Activated CD4-positive, alpha-beta memory T cell treated with anti-CD3 and anti-CD28 coated beads for 36 hours (primary cell): ENCODE measurements at regions of chr19 and their contacts with region 1.

Region 1: GRCh38 chr19:34269968-34270621 is 15.7 kb downstream of the GARRE1 start:
- DNase-seq: peak; percentile 85
- H3K4me3 Mint-ChIP-seq: peak overlapping the region; percentile 58
- H3K27ac Mint-ChIP-seq: peak overlapping the region; percentile 96
- H3K4me1 Mint-ChIP-seq: peaks cover 60% of the 10 kb centered on the region
- H3K27me3 Mint-ChIP-seq: no peaks in the 10 kb centered on the region

Region 2: DNA sequence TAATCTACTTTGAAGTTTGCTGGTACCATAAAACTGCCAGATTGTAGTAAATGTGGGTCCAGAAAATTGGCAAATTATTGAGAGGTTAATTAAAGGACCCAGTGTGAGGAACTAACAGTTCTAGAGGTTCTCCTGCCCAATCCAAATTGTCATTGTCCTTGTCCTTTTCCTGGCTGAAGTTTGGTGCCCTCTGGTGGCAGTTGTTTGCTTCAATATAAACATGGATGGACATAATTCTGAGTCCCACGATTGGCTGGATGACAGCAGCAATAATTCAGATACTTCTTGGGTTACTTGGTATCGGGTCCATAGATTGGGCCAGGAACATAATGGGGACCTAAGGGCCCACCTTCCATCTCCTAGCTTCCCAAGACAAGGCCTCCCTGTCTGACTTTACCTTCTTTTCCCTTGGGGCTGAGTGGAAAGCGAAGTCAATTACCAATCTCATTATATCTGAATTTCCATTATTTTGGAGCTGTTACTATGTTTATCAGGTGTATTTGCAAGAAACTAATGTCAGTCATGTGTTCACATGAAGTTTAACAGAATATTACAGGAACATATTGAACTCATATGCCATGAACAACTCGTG is 49.5 kb before region 1 on chr19:
- CTCF ChIA-PET with region 1: interaction called, 3 read pairs
- POLR2A ChIA-PET with region 1: no interaction called
- intact Hi-C with region 1: loop called (anchors 1 kb)
- DNase-seq: peak; percentile 69
- H3K4me3 Mint-ChIP-seq: no peak overlapping the region
- H3K27ac Mint-ChIP-seq: no peak overlapping the region
- H3K4me1 Mint-ChIP-seq: peaks cover 48% of the 10 kb centered on the region
- H3K27me3 Mint-ChIP-seq: no peaks in the 10 kb centered on the region

Region 3: DNA sequence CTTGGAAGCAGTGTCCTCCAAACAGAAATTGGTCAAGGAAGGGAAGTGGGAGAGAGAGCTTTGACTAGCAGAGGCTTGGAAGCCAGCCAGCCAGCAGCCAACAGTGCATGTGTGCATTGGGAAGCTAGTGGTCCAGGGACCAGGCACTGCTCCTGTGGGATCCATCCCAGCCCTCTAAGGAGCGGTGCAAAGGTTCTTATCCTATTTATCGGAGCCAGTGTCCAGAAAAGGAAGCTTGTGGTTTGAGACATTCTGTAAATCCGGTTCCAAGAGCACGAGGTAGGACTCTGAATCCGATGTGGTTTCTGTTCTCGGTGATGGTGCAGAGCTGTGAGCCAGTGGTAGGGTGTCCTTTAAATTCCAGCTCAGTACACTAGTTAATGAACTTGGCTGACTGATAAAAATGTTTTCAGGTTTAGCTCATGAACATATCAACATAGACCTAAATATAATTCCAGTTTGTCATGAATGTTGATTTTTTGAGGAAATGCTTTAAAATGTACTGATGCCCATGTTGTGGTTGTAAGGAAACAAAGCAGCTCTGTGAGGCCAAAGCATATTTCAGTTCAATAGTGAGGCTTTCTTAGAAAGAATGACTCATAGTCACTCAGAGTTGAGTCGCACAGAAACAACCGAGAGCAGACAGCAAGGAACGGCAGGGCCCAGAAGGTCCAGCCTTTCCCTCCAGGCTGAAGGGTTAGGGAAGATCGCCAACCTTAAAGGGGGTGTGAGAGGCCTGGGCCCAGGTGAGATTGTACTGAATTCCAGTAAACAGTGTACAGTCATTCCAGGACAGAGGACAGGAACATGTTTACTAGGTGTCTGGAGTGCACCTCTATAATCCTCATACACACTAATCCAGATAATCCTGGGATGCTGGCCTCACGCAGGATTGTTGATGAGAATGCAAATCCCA is 37.3 kb before region 1 on chr19:
- CTCF ChIA-PET with region 1: no interaction called
- POLR2A ChIA-PET with region 1: interaction called, 4 read pairs
- intact Hi-C with region 1: loop called (anchors 1 kb)
- DNase-seq: peak; percentile 56
- H3K4me3 Mint-ChIP-seq: no peak overlapping the region
- H3K27ac Mint-ChIP-seq: peak overlapping the region; percentile 84
- H3K4me1 Mint-ChIP-seq: peaks cover 32% of the 10 kb centered on the region
- H3K27me3 Mint-ChIP-seq: no peaks in the 10 kb centered on the region

Region 4: GRCh38 chr19:34253699-34254551 is 16.2 kb before region 1 on chr19:
- CTCF ChIA-PET with region 1: no interaction called
- POLR2A ChIA-PET with region 1: no interaction called
- intact Hi-C with region 1: loop called (anchors 1 kb)
- DNase-seq: peak; percentile 90
- H3K4me3 Mint-ChIP-seq: peak overlapping the region; percentile 89
- H3K27ac Mint-ChIP-seq: peak overlapping the region; percentile 86
- H3K4me1 Mint-ChIP-seq: peaks cover 27% of the 10 kb centered on the region
- H3K27me3 Mint-ChIP-seq: no peaks in the 10 kb centered on the region

Region 5: GRCh38 chr19:34308381-34309367 is 38.6 kb after region 1 on chr19:
- CTCF ChIA-PET with region 1: no interaction called
- POLR2A ChIA-PET with region 1: no interaction called
- intact Hi-C with region 1: loop called (anchors 5 kb)
- DNase-seq: peak; percentile 22
- H3K4me3 Mint-ChIP-seq: no peak overlapping the region
- H3K27ac Mint-ChIP-seq: peak overlapping the region; percentile 26
- H3K4me1 Mint-ChIP-seq: peaks cover 47% of the 10 kb centered on the region
- H3K27me3 Mint-ChIP-seq: no peaks in the 10 kb centered on the region

Region 6: GRCh38 chr19:34336781-34337271 is 66.7 kb after region 1 on chr19:
- CTCF ChIA-PET with region 1: interaction called, 6 read pairs
- POLR2A ChIA-PET with region 1: no interaction called
- intact Hi-C with region 1: loop called (anchors 5 kb)
- DNase-seq: peak; percentile 51
- H3K4me3 Mint-ChIP-seq: no peak overlapping the region
- H3K27ac Mint-ChIP-seq: no peak overlapping the region
- H3K4me1 Mint-ChIP-seq: peaks cover 6% of the 10 kb centered on the region
- H3K27me3 Mint-ChIP-seq: no peaks in the 10 kb centered on the region

Region 7: GRCh38 chr19:34393629-34394028 is 123.5 kb after region 1 on chr19:
- CTCF ChIA-PET with region 1: no interaction called
- POLR2A ChIA-PET with region 1: no interaction called
- intact Hi-C with region 1: no loop called
- DNase-seq: no peak
- H3K4me3 Mint-ChIP-seq: no peak overlapping the region
- H3K27ac Mint-ChIP-seq: no peak overlapping the region
- H3K4me1 Mint-ChIP-seq: no peaks in the 10 kb centered on the region
- H3K27me3 Mint-ChIP-seq: no peaks in the 10 kb centered on the region